PC-9 (cell line): ENCODE measurements at regions of chr1 and their contacts with region 1.

Region 1: GRCh38 chr1:39816415-39817090 is 27.9 kb upstream of the BMP8B start:
- DNase-seq: peak; percentile 90 to 97
- H3K4me3 ChIP-seq: no peak overlapping the region
- H3K27ac ChIP-seq: peak overlapping the region; percentile 36; the same call in 1 of the 2 replicates
- H3K4me1 ChIP-seq: peaks cover 21% of the 10 kb centered on the region
- H3K27me3 ChIP-seq: no peaks in the 10 kb centered on the region
- CTCF ChIP-seq: peak; percentile 83

Region 2: DNA sequence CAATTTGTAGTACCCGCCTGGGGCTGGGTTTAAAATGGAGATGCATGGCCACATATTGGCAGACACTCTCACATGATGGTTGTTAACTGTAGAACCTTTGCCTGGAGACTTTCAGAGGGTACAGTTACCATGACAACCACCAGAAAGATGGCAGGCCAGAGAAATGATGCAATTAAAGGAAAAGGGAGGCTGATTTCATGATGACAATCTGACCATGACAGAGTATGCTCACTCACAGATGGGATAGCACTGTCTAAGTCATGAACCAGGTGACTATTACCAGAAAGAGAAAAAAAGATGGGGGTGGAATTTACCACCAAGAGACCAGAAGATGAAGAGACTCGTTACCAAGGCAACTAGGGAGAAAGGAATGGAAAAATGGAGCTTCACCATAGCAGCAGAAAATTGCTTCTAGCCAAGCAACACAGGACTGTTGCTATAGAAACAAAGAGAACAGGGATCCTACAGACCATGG is 70.2 kb after region 1 on chr1:
- CTCF ChIA-PET with region 1: no interaction called
- POLR2A ChIA-PET with region 1: interaction called, 3 read pairs
- intact Hi-C with region 1: loop called (anchors 5 kb)
- DNase-seq: no peak
- H3K4me3 ChIP-seq: no peak overlapping the region
- H3K27ac ChIP-seq: no peak overlapping the region
- H3K4me1 ChIP-seq: peaks cover 20% of the 10 kb centered on the region
- H3K27me3 ChIP-seq: no peaks in the 10 kb centered on the region
- CTCF ChIP-seq: no peak

Region 3: DNA sequence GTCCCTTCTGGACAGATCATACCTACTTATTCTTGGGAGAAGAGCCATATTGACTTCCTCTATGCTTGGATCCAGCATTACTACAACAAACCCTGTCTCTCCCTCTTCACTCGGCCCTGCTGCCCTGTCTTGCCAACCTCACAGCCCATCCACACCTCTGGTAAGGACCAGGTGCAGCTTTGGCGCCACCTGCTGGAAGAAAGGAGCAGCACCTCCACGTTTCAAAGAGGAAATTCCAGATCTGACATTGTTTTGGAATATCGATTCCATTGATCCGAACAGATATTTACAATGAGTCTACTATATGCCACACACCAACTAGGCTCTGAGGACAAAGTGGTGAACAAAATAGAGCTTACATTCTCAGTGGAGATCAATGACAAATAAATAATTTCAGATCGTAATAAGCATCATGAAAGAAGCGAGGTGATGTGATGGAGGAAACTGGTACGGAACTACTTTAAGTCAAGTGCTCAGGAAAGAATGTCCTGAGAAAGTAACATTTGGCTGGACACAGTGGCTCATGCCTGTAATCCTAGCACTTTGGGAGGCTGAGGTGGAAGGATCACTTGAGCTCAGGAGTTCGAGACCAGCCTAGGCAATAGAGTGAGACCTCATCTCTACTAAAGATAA is 157.1 kb after region 1 on chr1:
- CTCF ChIA-PET with region 1: interaction called, 6 read pairs
- POLR2A ChIA-PET with region 1: no interaction called
- intact Hi-C with region 1: loop called (anchors 1 kb)
- DNase-seq: peak; percentile 42 to 69
- H3K4me3 ChIP-seq: no peak overlapping the region
- H3K27ac ChIP-seq: no peak overlapping the region
- H3K4me1 ChIP-seq: no peaks in the 10 kb centered on the region; the same call in 1 of the 2 replicates
- H3K27me3 ChIP-seq: no peaks in the 10 kb centered on the region
- CTCF ChIP-seq: peak; percentile 98

Region 4: GRCh38 chr1:40338745-40339424 is 522.3 kb after region 1 on chr1:
- CTCF ChIA-PET with region 1: no interaction called
- POLR2A ChIA-PET with region 1: no interaction called
- intact Hi-C with region 1: loop called (anchors 5 kb)
- DNase-seq: peak; percentile 71 to 93
- H3K4me3 ChIP-seq: no peak overlapping the region; the same call in 1 of the 2 replicates
- H3K27ac ChIP-seq: no peak overlapping the region
- H3K4me1 ChIP-seq: peaks cover 10% of the 10 kb centered on the region
- H3K27me3 ChIP-seq: no peaks in the 10 kb centered on the region
- CTCF ChIP-seq: peak; percentile 98